Left cardiac atrium (tissue), 4 donors: ENCODE measurements at regions of chr2 and their contacts with region 1.

Region 1: DNA sequence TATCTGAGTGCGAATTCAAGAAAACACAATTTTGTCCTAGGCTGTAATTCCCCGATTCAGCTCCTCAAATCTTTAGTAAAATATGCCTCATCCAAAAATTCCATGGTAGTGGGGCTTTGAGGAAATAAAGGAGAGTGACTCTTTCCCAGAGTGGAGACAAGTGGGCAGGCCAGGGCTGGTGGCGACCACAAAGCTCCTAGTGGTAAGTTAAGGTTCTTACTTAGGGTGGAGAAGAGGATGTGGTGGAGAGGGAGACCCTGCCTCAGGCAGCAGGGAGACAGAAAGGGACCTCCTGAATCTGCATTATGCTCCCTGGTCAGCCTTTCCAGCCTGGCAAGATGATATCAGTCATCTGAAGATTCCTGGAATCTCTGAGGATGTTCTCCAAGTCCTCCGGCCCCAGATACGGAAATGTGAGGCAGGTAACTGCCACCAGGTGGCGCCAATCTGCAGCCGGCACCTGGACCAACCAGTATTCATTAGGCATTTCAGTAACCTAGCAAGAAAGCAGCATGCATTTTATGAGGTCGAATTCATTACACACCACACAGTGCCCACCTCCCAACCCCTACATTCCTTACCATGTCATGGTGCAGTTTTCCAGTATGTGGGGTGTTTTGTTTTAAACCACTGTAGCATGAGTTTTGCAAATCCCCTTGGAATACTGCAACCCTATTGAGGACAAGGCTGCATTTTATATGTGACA is 106.4 kb downstream of the POLE4 start:
- DNase-seq: peak; percentile 38
- ATAC-seq: peak; percentile 40 to 65

Region 2: GRCh38 chr2:75403991-75404428 is 339.2 kb after region 1 on chr2:
- intact Hi-C with region 1: loop called in 1 of 2 experiments (anchors 5 kb)
- DNase-seq: no peak
- ATAC-seq: peak; percentile 55 to 60